Dendritic cell treated with granulocyte-macrophage colony-stimulating factor and Interleukin-4, amounts not matched to agents 40 ng/mL and 50 ng/mL, for 4 days (primary cell): ENCODE measurements at regions of chr14 and their contacts with region 1.

Region 1: DNA sequence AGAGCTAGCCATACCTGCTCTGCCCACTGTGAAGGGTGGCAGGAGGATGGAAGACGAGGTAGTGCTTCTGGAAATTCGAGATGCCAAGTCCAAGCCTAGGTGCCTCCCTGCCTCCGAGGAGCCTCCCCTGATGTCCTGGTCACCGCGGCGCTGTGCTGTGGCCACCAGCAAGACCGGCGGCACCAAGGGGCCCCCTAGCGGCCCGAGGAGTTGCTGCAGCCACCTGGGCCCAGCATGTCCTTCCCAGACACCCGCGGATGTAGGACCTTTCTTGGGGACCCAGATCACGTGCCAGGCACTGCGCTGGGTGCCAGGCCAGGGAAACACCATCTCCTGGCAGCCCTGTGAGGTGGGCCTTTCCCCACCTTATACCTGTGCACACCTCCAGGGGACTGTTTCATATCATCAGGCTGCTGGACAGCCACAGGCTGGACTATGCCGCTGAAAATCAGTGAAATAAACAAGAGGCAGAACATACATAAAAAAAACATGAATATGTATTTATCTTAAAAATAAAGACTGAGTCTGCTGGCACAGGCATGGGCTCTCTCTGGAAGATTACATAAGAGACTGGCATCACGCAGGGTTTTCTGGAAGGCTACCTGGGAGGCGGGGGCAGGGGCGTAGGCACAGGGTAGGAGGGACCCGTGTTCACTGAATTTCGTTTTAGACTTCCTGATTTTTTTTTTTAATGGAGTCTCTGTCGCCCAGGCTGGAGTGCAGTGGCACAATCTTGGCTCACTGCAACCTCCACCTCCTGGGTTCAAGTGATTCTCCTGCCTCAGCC is 15.9 kb upstream of the HHIPL1 start:
- H3K4me3 Mint-ChIP-seq: no peak overlapping the region
- H3K27ac Mint-ChIP-seq: no peak overlapping the region
- H3K4me1 Mint-ChIP-seq: no peaks in the 10 kb centered on the region
- H3K27me3 Mint-ChIP-seq: peaks cover 8% of the 10 kb centered on the region

Region 2: GRCh38 chr14:99518441-99519346 is 110.3 kb before region 1 on chr14:
- intact Hi-C with region 1: loop called (anchors 1 kb)
- H3K4me3 Mint-ChIP-seq: no peak overlapping the region
- H3K27ac Mint-ChIP-seq: no peak overlapping the region
- H3K4me1 Mint-ChIP-seq: no peaks in the 10 kb centered on the region
- H3K27me3 Mint-ChIP-seq: peaks cover 1% of the 10 kb centered on the region

Region 3: DNA sequence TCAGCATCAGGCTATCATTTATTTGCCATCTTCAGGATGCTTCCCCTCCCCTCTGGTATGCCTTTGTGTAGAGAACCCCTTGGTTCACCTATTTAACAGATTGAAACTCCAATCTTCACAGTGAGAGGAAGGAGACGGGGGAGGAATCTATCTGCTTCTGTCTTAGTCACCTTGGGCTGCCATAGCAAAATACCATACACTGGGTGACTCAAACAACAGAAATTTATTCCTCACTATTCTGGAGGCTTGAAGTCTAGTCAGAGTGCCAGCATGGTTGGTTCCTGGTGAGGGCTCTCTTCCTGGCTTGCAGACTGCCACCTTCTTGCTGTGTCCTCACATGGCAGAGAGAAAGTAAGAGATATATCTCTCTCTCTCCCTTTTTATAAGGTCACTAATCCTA is 150.7 kb after region 1 on chr14:
- intact Hi-C with region 1: no loop called
- H3K4me3 Mint-ChIP-seq: no peak overlapping the region
- H3K27ac Mint-ChIP-seq: no peak overlapping the region
- H3K4me1 Mint-ChIP-seq: no peaks in the 10 kb centered on the region
- H3K27me3 Mint-ChIP-seq: peaks cover 8% of the 10 kb centered on the region